ENCODE measurements at regions of chr11 and their contacts with region 1.

Region 1: GRCh38 chr11:18243783-18244362 is 4.6 kb downstream of the SAA2 start:
- DNase-seq: peak; percentile 73
- H3K4me3 Mint-ChIP-seq: no peak overlapping the region
- H3K27ac Mint-ChIP-seq: no peak overlapping the region
- H3K4me1 Mint-ChIP-seq: peaks cover 16% of the 10 kb centered on the region
- H3K27me3 Mint-ChIP-seq: peaks cover 7% of the 10 kb centered on the region

Region 2: GRCh38 chr11:17601256-17601671 is 642.6 kb before region 1 on chr11:
- CTCF ChIA-PET with region 1: no interaction called
- POLR2A ChIA-PET with region 1: no interaction called
- intact Hi-C with region 1: no loop called
- DNase-seq: peak; percentile 9
- H3K4me3 Mint-ChIP-seq: no peak overlapping the region
- H3K27ac Mint-ChIP-seq: no peak overlapping the region
- H3K4me1 Mint-ChIP-seq: peaks cover 10% of the 10 kb centered on the region
- H3K27me3 Mint-ChIP-seq: no peaks in the 10 kb centered on the region

Region 3: DNA sequence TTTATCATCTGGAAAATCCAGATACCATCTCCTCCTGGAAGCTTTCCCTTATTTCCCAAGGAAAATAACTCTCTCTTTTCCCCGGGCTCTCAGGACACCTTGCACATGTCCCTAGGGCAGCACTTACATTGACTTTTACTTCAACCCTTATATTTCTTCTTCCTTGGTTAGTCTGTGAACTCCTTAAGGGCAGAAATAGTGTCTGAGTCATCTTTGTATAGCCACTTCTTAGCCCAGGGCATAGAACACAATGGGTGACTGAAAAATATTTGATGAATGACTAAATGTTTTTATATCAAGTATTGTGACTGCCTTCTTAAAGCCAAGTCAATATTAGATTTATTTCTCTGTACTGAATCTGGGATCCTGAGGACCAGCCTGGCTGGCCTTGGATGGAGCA is 569.9 kb before region 1 on chr11:
- CTCF ChIA-PET with region 1: no interaction called
- POLR2A ChIA-PET with region 1: no interaction called
- intact Hi-C with region 1: no loop called
- DNase-seq: no peak
- H3K4me3 Mint-ChIP-seq: no peak overlapping the region
- H3K27ac Mint-ChIP-seq: no peak overlapping the region
- H3K4me1 Mint-ChIP-seq: no peaks in the 10 kb centered on the region
- H3K27me3 Mint-ChIP-seq: peaks cover 15% of the 10 kb centered on the region

Region 4: DNA sequence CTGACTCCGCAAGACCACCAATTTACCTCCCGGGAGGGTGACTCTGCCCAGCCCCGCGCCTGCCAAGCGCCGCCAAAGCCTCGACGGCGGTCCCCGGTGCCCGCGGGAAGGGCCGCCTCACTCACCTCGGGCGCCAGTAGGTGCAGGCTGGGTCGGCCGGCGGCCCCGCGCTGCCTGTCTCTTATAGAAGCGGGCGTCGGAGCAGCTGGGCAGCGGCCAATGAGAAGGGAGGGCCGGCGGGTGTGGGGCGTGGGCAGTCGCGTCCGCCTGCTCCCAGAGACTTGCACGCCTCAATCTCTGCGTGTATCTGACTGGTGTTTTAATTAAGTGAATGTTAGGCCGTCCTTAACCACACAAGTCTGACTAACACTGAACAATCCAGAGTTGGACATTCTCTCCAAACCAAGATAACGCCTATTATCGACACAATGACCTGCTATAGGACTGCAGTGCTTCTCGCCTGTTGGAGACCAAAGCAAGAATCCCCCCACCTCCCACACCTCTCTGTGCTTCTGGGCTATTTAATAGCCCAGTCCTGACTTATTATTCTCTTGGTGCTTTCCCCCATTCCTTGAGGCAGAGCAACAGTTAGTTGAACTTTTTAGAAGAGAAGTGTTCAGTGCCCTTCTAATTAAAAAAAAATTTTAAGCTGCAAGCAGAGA is 197.6 kb before region 1 on chr11 and contains the start of gene TPH1:
- CTCF ChIA-PET with region 1: no interaction called
- POLR2A ChIA-PET with region 1: no interaction called
- intact Hi-C with region 1: no loop called
- DNase-seq: no peak
- H3K4me3 Mint-ChIP-seq: no peak within 1 kb of the TSS
- H3K27ac Mint-ChIP-seq: no peak within 1 kb of the TSS
- H3K4me1 Mint-ChIP-seq: no peaks in the 10 kb centered on the region
- H3K27me3 Mint-ChIP-seq: peaks cover 42% of the 10 kb centered on the region
- total RNA-seq, gene TPH1: 0.05 to 0.14 TPM

Region 5: DNA sequence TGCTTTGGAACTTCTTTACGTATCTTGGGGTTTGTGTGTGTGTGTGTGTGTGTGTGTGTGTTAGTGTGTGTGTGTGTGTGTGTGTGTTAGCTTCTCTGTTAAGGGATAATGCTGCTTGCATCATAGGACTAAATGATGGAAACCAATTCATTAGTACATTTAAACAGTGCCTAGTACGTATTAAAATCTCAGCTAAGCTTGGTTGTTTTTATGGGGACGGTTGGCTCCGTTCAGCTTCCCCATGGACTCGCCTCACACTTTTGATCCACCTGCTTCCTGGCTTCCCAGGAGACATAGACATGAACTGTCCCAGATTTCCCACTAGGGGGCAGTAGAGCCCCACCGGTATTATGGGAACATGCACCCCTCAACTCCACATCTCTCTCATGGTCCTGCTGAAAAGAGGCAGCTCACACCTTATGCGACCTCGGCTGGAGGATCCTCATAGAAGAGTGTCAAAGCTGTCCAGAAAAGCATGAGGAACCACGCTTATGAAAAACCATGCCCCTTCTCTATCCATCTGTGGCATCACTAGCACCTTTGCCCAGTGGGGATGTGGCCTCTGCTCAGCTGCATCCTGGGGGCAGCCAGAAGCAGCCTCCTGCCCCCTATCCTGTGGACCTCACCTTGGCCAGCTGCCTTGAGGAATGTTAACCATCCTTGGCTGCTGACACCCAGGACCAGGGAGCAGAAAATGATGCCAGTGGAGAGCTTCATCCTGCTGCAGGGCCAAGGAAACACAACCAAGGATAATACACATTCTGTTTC is 128.3 kb before region 1 on chr11:
- CTCF ChIA-PET with region 1: interaction called, 12 read pairs
- POLR2A ChIA-PET with region 1: no interaction called
- intact Hi-C with region 1: loop called (anchors 5 kb)
- DNase-seq: peak; percentile 70
- H3K4me3 Mint-ChIP-seq: no peak overlapping the region
- H3K27ac Mint-ChIP-seq: no peak overlapping the region
- H3K4me1 Mint-ChIP-seq: no peaks in the 10 kb centered on the region
- H3K27me3 Mint-ChIP-seq: peaks cover 10% of the 10 kb centered on the region

Region 6: DNA sequence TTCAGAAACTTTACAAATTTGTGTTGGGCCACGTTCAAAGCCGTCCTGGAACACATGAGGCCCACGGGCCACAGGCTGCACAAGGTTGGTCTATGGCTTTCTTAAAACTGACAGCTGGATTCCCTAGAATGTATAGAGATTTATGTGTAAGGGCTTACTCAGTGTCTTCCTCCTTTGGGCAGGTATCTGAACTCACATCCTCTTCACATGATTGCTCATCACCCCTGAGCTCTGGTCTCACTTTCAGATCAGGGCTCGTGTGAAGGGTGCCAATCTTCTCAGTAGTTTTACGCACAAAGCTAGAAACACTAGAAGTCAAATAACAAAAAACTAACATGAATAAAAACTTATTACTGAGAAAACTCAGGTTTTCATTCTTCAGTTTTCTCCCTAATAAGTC is 51.0 kb after region 1 on chr11:
- CTCF ChIA-PET with region 1: interaction called, 11 read pairs
- POLR2A ChIA-PET with region 1: no interaction called
- intact Hi-C with region 1: no loop called
- DNase-seq: peak; percentile 19
- H3K4me3 Mint-ChIP-seq: no peak overlapping the region
- H3K27ac Mint-ChIP-seq: no peak overlapping the region
- H3K4me1 Mint-ChIP-seq: peaks cover 17% of the 10 kb centered on the region
- H3K27me3 Mint-ChIP-seq: no peaks in the 10 kb centered on the region

Region 7: DNA sequence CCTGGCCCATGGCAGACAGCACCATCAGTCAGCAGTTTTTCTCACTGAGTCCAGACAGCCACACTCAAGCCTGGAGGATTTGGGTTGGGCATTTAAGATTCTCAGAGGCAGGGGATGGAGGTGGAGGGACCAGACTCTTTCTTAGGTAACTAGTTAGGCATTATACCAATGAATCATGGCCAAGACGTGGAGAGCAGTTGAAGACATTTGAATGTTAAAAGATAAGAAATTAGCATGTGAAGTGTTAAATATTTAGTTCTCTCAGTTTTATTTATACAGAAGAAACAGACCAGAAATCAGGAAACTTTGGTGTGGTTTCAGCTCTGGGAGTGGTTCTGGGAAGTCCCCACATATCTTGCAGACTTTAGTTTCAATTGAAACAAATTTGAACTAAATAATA is 88.4 kb after region 1 on chr11:
- CTCF ChIA-PET with region 1: interaction called, 10 read pairs
- POLR2A ChIA-PET with region 1: no interaction called
- intact Hi-C with region 1: no loop called
- DNase-seq: no peak
- H3K4me3 Mint-ChIP-seq: no peak overlapping the region
- H3K27ac Mint-ChIP-seq: peak overlapping the region; percentile 78
- H3K4me1 Mint-ChIP-seq: peaks cover 52% of the 10 kb centered on the region
- H3K27me3 Mint-ChIP-seq: no peaks in the 10 kb centered on the region

Region 8: DNA sequence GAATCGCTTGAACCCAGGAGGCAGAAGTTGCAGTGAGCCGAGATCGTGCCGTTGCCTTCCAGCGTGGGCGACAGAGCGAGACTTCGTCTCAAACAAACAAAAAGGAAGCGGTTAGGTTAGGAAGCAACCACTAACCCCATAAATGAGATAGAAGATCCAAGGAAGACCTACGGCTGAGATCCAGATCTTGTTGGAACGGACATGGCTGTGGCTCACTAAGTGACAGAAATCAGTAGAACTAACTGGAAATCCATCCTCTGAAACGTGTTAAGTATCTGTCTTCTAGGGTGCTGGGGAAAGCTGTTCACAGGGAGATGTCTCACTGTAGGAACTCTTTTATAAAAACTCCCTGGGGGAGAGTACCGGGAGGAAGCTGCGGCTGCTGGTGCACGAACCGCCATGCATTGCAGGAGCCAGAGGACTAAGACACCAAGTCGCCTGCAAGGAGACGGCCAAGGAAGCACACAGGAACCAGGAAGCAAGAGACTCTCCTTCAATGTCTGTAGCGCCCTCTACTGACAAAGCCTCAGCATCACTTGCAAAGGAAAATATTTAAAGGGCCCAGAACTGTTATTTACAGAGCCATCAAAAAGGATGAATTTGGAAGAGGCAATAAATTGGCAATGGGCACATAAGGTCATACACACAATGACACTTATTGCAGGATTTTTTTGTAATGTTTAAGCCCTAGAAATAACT is 407.1 kb after region 1 on chr11:
- CTCF ChIA-PET with region 1: interaction called, 11 read pairs
- POLR2A ChIA-PET with region 1: no interaction called
- intact Hi-C with region 1: loop called (anchors 5 kb)
- DNase-seq: peak; percentile 58
- H3K4me3 Mint-ChIP-seq: peak overlapping the region; percentile 17
- H3K27ac Mint-ChIP-seq: no peak overlapping the region
- H3K4me1 Mint-ChIP-seq: peaks cover 4% of the 10 kb centered on the region
- H3K27me3 Mint-ChIP-seq: no peaks in the 10 kb centered on the region